Right lobe of liver (tissue), 6 donors: ENCODE measurements at regions of chr13 and their contacts with region 1.

Region 1: GRCh38 chr13:21297914-21298831 is 121.7 kb downstream of the MRPL57 start:
- DNase-seq: peak; percentile 89 to 92 (median 90)
- ATAC-seq: peak; percentile 98 to 100 (median 99)
- H3K4me3 ChIP-seq: peak overlapping the region; percentile 95 to 96 (median 96)
- H3K27ac ChIP-seq: peak overlapping the region in 1 of 3 donors; percentile 25
- H3K4me1 ChIP-seq: peaks cover 0 to 12% (median 0%) of the 10 kb centered on the region in 4 donors
- H3K27me3 ChIP-seq: no peaks in the 10 kb centered on the region
- CTCF ChIP-seq: peak; percentile 88 to 96 (median 92)
- POLR2A ChIP-seq: no peak

Region 2: GRCh38 chr13:21465710-21466160 is 167.6 kb after region 1 on chr13:
- intact Hi-C with region 1: loop called (anchors 10 kb)
- DNase-seq: no peak
- ATAC-seq: peak in 1 of 4 donors; percentile 12
- H3K4me3 ChIP-seq: no peak overlapping the region
- H3K27ac ChIP-seq: no peak overlapping the region
- H3K4me1 ChIP-seq: no peaks in the 10 kb centered on the region
- H3K27me3 ChIP-seq: no peaks in the 10 kb centered on the region
- CTCF ChIP-seq: no peak
- POLR2A ChIP-seq: no peak

Region 3: GRCh38 chr13:21476893-21477472 is 178.8 kb after region 1 on chr13:
- intact Hi-C with region 1: loop called in 1 of 2 experiments (anchors 10 kb)
- DNase-seq: peak; percentile 83 to 85 (median 83)
- ATAC-seq: peak; percentile 95 to 96 (median 96)
- H3K4me3 ChIP-seq: peak overlapping the region; percentile 13 to 54 (median 49)
- H3K27ac ChIP-seq: peak overlapping the region in 1 of 3 donors; percentile 17
- H3K4me1 ChIP-seq: peaks cover 0 to 9% (median 3%) of the 10 kb centered on the region in 4 donors
- H3K27me3 ChIP-seq: no peaks in the 10 kb centered on the region
- CTCF ChIP-seq: peak; percentile 93 to 98 (median 95)
- POLR2A ChIP-seq: no peak